MCF 10A (cell line): ENCODE measurements at regions of chr11 and their contacts with region 1.

Region 1: DNA sequence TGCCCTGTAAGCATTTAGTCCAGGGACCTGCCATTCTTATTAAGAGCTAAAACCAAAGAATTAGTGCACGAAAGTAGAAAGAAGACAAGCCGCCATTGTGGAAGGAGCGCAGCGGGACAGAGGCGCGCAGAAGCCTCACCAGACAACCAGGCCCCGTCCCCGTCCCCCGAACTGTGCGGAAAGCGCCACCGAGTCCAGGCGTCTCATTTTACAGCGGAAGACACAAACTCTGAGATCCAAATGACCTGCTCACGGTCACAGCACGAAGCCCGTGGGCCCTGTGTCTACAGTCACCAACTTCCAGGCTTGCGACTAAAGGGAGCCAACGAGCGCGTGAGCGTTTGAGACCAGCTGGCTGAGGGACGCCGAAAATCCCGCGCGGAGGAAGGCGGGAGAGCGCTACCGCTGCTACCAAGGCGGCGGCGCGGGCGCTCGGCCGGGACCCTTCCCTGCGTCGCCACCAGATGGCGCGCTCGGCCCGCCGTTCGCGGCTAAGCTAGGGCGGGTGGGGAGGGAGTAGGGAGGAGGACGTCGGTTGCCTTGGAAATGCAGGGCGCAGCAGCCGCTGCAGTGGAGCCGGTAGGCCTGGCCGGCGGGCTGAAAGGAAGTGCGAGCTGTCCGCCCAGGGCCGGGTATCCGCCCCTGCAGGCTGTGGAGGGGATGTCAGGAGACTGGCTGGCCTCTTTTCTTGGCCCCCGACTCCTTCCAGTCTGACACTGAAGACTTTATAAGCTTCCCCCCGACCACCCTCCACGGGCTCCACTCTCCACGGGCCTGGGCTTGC is 434 bp upstream of the CCDC83 start:
- DNase-seq: peak; percentile 85
- H3K4me3 Mint-ChIP-seq: peak overlapping the region; percentile 76
- H3K27ac Mint-ChIP-seq: peak overlapping the region; percentile 87
- H3K4me1 Mint-ChIP-seq: no peaks in the 10 kb centered on the region
- H3K27me3 Mint-ChIP-seq: no peaks in the 10 kb centered on the region
- CTCF ChIP-seq: peak; percentile 86

Region 2: DNA sequence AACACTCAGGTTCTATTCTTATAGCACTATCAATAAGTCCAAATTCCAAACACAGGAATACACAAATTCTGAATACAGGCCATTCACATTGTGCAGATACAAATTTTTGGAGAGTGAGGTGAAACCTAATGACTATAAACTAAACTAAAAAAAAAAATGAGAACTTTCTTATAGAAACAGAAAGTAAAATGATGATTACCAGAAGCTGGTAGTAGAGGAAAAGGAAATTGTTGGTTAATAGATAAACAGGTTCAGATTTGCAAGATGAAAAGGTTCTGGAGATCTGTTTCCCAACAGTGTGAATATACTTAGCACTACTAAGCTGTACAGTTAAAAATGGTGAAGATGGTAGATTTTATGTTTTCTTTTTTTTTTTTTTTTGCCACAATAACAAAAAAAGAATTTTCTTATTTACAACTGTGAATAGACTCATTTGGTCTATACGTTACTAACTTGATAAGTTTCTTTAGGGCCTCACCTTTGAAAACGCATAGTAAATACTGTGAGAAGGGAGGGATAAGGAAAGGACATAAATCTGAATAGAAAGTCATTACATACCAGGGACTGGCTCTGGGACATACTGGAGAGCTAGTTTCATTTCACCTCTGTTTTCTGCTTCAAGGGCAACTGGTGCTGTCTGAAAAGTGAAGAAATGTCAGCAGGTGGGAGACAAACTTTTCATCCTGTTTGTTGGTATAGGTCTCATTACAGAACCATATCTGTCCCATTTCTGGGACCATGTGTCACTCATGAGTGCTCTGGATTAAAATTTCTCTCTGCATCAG is 154.6 kb before region 1 on chr11:
- CTCF ChIA-PET with region 1: interaction called, 13 read pairs
- POLR2A ChIA-PET with region 1: no interaction called
- intact Hi-C with region 1: no loop called
- DNase-seq: no peak
- H3K4me3 Mint-ChIP-seq: no peak overlapping the region
- H3K27ac Mint-ChIP-seq: no peak overlapping the region
- H3K4me1 Mint-ChIP-seq: no peaks in the 10 kb centered on the region
- H3K27me3 Mint-ChIP-seq: no peaks in the 10 kb centered on the region
- CTCF ChIP-seq: no peak

Region 3: GRCh38 chr11:85718991-85719807 is 135.6 kb before region 1 on chr11:
- CTCF ChIA-PET with region 1: no interaction called
- POLR2A ChIA-PET with region 1: no interaction called
- intact Hi-C with region 1: no loop called
- DNase-seq: peak; percentile 85
- H3K4me3 Mint-ChIP-seq: no peak overlapping the region
- H3K27ac Mint-ChIP-seq: no peak overlapping the region
- H3K4me1 Mint-ChIP-seq: peaks cover 13% of the 10 kb centered on the region
- H3K27me3 Mint-ChIP-seq: no peaks in the 10 kb centered on the region
- CTCF ChIP-seq: no peak

Region 4: DNA sequence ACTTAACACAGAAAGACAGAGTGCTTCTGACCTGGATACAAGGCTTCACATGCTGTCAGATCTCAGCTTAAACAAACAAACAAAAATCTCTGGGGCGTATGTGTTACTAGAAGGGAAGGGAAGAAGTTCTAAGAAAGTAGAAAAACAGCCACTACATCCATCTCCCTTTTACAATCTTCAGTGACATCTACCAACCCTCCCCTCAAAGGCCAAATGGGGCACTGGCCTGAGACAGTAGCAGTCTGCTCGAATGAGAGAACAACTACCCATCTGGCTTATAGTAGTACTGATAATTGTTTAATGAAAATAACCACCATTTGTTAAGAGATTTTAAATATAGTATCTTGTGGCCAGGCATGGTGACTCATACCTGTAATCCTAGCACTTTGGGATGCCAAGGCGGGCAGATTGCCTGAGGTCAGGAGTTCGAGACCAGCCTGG is 29.9 kb after region 1 on chr11:
- CTCF ChIA-PET with region 1: no interaction called
- POLR2A ChIA-PET with region 1: no interaction called
- intact Hi-C with region 1: no loop called
- DNase-seq: peak; percentile 6
- H3K4me3 Mint-ChIP-seq: no peak overlapping the region
- H3K27ac Mint-ChIP-seq: no peak overlapping the region
- H3K4me1 Mint-ChIP-seq: peaks cover 2% of the 10 kb centered on the region
- H3K27me3 Mint-ChIP-seq: no peaks in the 10 kb centered on the region
- CTCF ChIP-seq: no peak

Region 5: DNA sequence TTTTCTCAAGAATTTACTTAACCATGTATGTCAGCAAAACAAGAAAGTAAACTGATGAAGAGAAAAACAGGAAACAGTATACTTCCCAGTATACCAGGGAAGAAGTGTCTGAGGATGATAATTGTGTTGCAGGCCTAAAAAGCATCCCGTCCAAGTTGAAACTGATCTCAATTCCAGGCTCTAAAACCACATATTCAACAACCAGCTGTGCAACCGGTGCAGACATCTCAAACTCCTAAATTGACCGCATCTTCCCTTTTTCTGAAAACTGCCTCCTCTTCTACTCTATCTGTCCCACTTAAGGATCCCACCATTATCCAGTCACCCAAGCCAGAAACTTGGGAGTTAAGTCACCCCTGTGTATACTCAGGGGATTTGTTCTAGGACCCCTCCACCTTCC is 47.6 kb after region 1 on chr11:
- CTCF ChIA-PET with region 1: no interaction called
- POLR2A ChIA-PET with region 1: no interaction called
- intact Hi-C with region 1: no loop called
- DNase-seq: no peak
- H3K4me3 Mint-ChIP-seq: no peak overlapping the region
- H3K27ac Mint-ChIP-seq: no peak overlapping the region
- H3K4me1 Mint-ChIP-seq: no peaks in the 10 kb centered on the region
- H3K27me3 Mint-ChIP-seq: no peaks in the 10 kb centered on the region
- CTCF ChIP-seq: no peak

Region 6: DNA sequence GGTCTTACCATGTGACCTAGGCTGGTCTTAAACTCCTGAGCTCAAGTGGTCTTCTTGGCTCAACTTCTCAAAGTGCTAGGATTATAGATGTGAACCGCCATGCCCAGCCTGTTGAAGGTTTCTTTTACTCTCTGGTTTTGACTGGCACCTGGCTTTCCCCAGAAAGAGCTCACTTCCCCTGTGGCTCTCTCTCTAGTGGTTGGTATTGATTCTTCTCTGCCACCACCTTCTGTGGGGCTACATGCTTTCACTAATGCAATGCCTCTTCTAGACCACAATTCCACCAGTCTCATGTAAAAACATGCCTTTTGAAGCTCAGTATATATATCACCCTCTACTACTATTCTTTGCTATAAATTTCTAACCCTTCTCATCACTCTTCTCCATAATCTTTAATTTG is 67.6 kb after region 1 on chr11:
- CTCF ChIA-PET with region 1: no interaction called
- POLR2A ChIA-PET with region 1: no interaction called
- intact Hi-C with region 1: no loop called
- DNase-seq: no peak
- H3K4me3 Mint-ChIP-seq: no peak overlapping the region
- H3K27ac Mint-ChIP-seq: no peak overlapping the region
- H3K4me1 Mint-ChIP-seq: no peaks in the 10 kb centered on the region
- H3K27me3 Mint-ChIP-seq: peaks cover 52% of the 10 kb centered on the region
- CTCF ChIP-seq: no peak

Region 7: GRCh38 chr11:86218125-86219084 is 363.7 kb after region 1 on chr11:
- CTCF ChIA-PET with region 1: interaction called, 28 read pairs
- POLR2A ChIA-PET with region 1: no interaction called
- intact Hi-C with region 1: loop called (anchors 1 kb)
- DNase-seq: peak; percentile 79
- H3K4me3 Mint-ChIP-seq: no peak overlapping the region
- H3K27ac Mint-ChIP-seq: no peak overlapping the region
- H3K4me1 Mint-ChIP-seq: peaks cover 6% of the 10 kb centered on the region
- H3K27me3 Mint-ChIP-seq: no peaks in the 10 kb centered on the region
- CTCF ChIP-seq: peak; percentile 81

Region 8: GRCh38 chr11:86418917-86419316 is 564.2 kb after region 1 on chr11:
- CTCF ChIA-PET with region 1: interaction called, 4 read pairs
- POLR2A ChIA-PET with region 1: interaction called, 4 read pairs
- intact Hi-C with region 1: loop called (anchors 10 kb)
- DNase-seq: peak; percentile 30
- H3K4me3 Mint-ChIP-seq: no peak overlapping the region
- H3K27ac Mint-ChIP-seq: no peak overlapping the region
- H3K4me1 Mint-ChIP-seq: no peaks in the 10 kb centered on the region
- H3K27me3 Mint-ChIP-seq: no peaks in the 10 kb centered on the region
- CTCF ChIP-seq: peak; percentile 10